MCF 10A (cell line): ENCODE measurements at regions of chr1 and their contacts with region 1.

Region 1: DNA sequence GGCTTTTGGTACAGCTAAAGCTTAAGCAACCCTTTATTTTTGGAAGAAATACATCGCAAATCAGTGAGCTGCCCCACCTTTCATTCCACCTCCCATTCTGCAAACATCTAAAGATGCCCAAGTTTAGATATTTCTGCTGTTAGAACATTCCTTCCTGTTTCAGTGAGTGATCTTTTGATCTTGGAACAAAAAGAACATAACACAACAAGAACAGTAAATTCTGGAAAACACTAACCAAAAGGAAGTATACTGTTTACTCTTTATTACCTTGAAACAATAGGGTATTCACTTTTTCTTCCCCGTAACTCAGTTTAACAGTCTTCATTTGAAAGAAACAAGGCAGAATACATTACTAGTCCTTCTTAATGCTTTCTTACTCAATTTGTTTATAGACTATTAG is 40.6 kb downstream of the HNRNPR start:
- DNase-seq: no peak
- H3K4me3 Mint-ChIP-seq: no peak overlapping the region
- H3K27ac Mint-ChIP-seq: peak overlapping the region; percentile 12
- H3K4me1 Mint-ChIP-seq: peaks cover 5% of the 10 kb centered on the region
- H3K27me3 Mint-ChIP-seq: no peaks in the 10 kb centered on the region
- CTCF ChIP-seq: no peak

Region 2: DNA sequence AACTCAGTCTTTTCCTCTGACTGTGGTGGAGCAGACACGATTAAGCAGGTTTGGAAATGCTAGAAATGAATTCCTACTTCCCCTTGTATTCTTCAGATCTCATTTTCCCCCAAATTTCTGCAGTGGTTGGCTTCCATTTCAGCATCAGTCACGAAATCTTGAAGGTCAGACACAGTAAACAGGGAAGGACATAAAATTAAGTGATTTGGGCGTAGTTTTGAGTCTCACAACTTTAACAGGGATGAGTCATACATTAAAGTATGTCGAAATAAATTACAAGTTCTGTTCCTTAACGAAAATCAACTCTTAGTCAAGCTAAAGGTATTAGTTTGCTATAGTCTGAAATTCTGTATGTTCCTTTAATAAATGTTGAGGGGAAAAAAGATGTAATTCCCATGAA is 20.6 kb before region 1 on chr1:
- CTCF ChIA-PET with region 1: interaction called, 3 read pairs
- POLR2A ChIA-PET with region 1: interaction called, 12 read pairs
- intact Hi-C with region 1: no loop called
- DNase-seq: peak; percentile 69
- H3K4me3 Mint-ChIP-seq: peak overlapping the region; percentile 26
- H3K27ac Mint-ChIP-seq: peak overlapping the region; percentile 80
- H3K4me1 Mint-ChIP-seq: peaks cover 32% of the 10 kb centered on the region
- H3K27me3 Mint-ChIP-seq: no peaks in the 10 kb centered on the region
- CTCF ChIP-seq: no peak